ENCODE measurements at regions of chr5 and their contacts with region 1.

Region 1: GRCh38 chr5:173689737-173690360 is 73.4 kb upstream of the BOD1 start:
- DNase-seq: peak; percentile 63
- ATAC-seq: peak; percentile 80
- H3K4me3 ChIP-seq: no peak overlapping the region
- H3K4me3 Mint-ChIP-seq: peak overlapping the region; percentile 81
- H3K27ac ChIP-seq: peak overlapping the region; percentile 60 to 64
- H3K27ac Mint-ChIP-seq: peak overlapping the region; percentile 93
- H3K4me1 ChIP-seq: peaks cover 30 to 43% of the 10 kb centered on the region in 2 donors
- H3K4me1 Mint-ChIP-seq: peaks cover 44% of the 10 kb centered on the region
- H3K27me3 ChIP-seq: no peaks in the 10 kb centered on the region
- H3K27me3 Mint-ChIP-seq: no peaks in the 10 kb centered on the region
- CTCF ChIP-seq: peak; percentile 39

Region 2: GRCh38 chr5:173736923-173737412 is 47.1 kb after region 1 on chr5:
- CTCF ChIA-PET with region 1: interaction called, 3 read pairs
- POLR2A ChIA-PET with region 1: no interaction called
- intact Hi-C with region 1: loop called (anchors 10 kb)
- DNase-seq: peak; percentile 76
- ATAC-seq: peak; percentile 62
- H3K4me3 ChIP-seq: peak overlapping the region in 1 of 5 experiments; percentile 30
- H3K4me3 Mint-ChIP-seq: peak overlapping the region; percentile 61
- H3K27ac ChIP-seq: peak overlapping the region in 1 of 2 donors; percentile 52
- H3K27ac Mint-ChIP-seq: peak overlapping the region; percentile 61
- H3K4me1 ChIP-seq: peaks cover 59 to 69% of the 10 kb centered on the region in 2 donors
- H3K4me1 Mint-ChIP-seq: peaks cover 74% of the 10 kb centered on the region
- H3K27me3 ChIP-seq: no peaks in the 10 kb centered on the region
- H3K27me3 Mint-ChIP-seq: no peaks in the 10 kb centered on the region
- CTCF ChIP-seq: no peak

Measured in B cell (primary cell).